Activated CD8-positive, alpha-beta T cell treated with anti-CD3 and anti-CD28 coated beads, Interleukin-2, amount 10 ng/mL, durations not matched to agents 7 days and 5 days (primary cell): ENCODE measurements at regions of chr13 and their contacts with region 1.

Region 1: GRCh38 chr13:27981006-27981708 is 7.3 kb downstream of the URAD start:
- DNase-seq: no peak
- ATAC-seq: no peak
- H3K4me3 Mint-ChIP-seq: no peak overlapping the region
- H3K27ac Mint-ChIP-seq: no peak overlapping the region
- H3K4me1 Mint-ChIP-seq: peaks cover 17% of the 10 kb centered on the region
- H3K27me3 Mint-ChIP-seq: peaks cover 65% of the 10 kb centered on the region

Region 2: GRCh38 chr13:27658546-27658945 is 322.6 kb before region 1 on chr13:
- CTCF ChIA-PET with region 1: no interaction called
- POLR2A ChIA-PET with region 1: no interaction called
- DNase-seq: no peak
- ATAC-seq: no peak
- H3K4me3 Mint-ChIP-seq: no peak overlapping the region
- H3K27ac Mint-ChIP-seq: no peak overlapping the region
- H3K4me1 Mint-ChIP-seq: no peaks in the 10 kb centered on the region
- H3K27me3 Mint-ChIP-seq: no peaks in the 10 kb centered on the region

Region 3: GRCh38 chr13:27997904-27998522 is 16.9 kb after region 1 on chr13:
- CTCF ChIA-PET with region 1: interaction called, 14 read pairs
- POLR2A ChIA-PET with region 1: no interaction called
- DNase-seq: peak; percentile 55
- ATAC-seq: peak; percentile 73
- H3K4me3 Mint-ChIP-seq: no peak overlapping the region
- H3K27ac Mint-ChIP-seq: no peak overlapping the region
- H3K4me1 Mint-ChIP-seq: no peaks in the 10 kb centered on the region
- H3K27me3 Mint-ChIP-seq: no peaks in the 10 kb centered on the region